MCF 10A (cell line): ENCODE measurements at regions of chr5 and their contacts with region 1.

Region 1: GRCh38 chr5:142713121-142713706 is 27.3 kb upstream of the FGF1 start:
- DNase-seq: peak; percentile 95
- H3K4me3 Mint-ChIP-seq: peak overlapping the region; percentile 77
- H3K27ac Mint-ChIP-seq: peak overlapping the region; percentile 10
- H3K4me1 Mint-ChIP-seq: peaks cover 19% of the 10 kb centered on the region
- H3K27me3 Mint-ChIP-seq: no peaks in the 10 kb centered on the region
- CTCF ChIP-seq: peak; percentile 99

Region 2: DNA sequence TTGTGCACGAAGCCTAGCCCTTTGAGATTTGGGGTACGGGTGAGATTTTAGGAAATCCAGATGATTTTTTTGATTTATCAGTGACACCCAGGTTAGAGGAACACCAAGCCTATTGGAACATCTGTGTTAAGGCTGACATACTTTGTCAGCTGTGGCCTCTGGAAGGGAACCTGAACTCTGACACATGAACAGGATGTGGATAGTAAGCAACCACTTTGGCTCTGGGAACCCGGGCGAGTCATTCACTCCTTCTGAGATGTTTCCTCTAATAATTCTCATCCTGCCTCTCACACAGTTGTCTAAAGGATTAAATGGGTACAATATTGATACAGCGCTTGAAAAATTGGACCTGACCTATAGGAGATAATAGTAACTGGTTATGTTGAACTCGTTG is 95.1 kb before region 1 on chr5:
- CTCF ChIA-PET with region 1: interaction called, 25 read pairs
- POLR2A ChIA-PET with region 1: no interaction called
- intact Hi-C with region 1: no loop called
- DNase-seq: no peak
- H3K4me3 Mint-ChIP-seq: no peak overlapping the region
- H3K27ac Mint-ChIP-seq: no peak overlapping the region
- H3K4me1 Mint-ChIP-seq: peaks cover 12% of the 10 kb centered on the region
- H3K27me3 Mint-ChIP-seq: no peaks in the 10 kb centered on the region
- CTCF ChIP-seq: no peak

Region 3: GRCh38 chr5:142674531-142675469 is 38.4 kb before region 1 on chr5:
- CTCF ChIA-PET with region 1: interaction called, 1,243 read pairs
- POLR2A ChIA-PET with region 1: no interaction called
- intact Hi-C with region 1: no loop called
- DNase-seq: peak; percentile 68
- H3K4me3 Mint-ChIP-seq: no peak overlapping the region
- H3K27ac Mint-ChIP-seq: no peak overlapping the region
- H3K4me1 Mint-ChIP-seq: peaks cover 10% of the 10 kb centered on the region
- H3K27me3 Mint-ChIP-seq: no peaks in the 10 kb centered on the region
- CTCF ChIP-seq: no peak

Region 4: GRCh38 chr5:142740474-142741242 is 27.4 kb after region 1 on chr5:
- CTCF ChIA-PET with region 1: interaction called, 253 read pairs
- POLR2A ChIA-PET with region 1: no interaction called
- intact Hi-C with region 1: no loop called
- DNase-seq: no peak
- H3K4me3 Mint-ChIP-seq: no peak overlapping the region
- H3K27ac Mint-ChIP-seq: no peak overlapping the region
- H3K4me1 Mint-ChIP-seq: peaks cover 13% of the 10 kb centered on the region
- H3K27me3 Mint-ChIP-seq: no peaks in the 10 kb centered on the region
- CTCF ChIP-seq: no peak

Region 5: GRCh38 chr5:142852416-142853198 is 139.4 kb after region 1 on chr5:
- CTCF ChIA-PET with region 1: interaction called, 15 read pairs
- POLR2A ChIA-PET with region 1: no interaction called
- intact Hi-C with region 1: no loop called
- DNase-seq: no peak
- H3K4me3 Mint-ChIP-seq: no peak overlapping the region
- H3K27ac Mint-ChIP-seq: no peak overlapping the region
- H3K4me1 Mint-ChIP-seq: peaks cover 2% of the 10 kb centered on the region
- H3K27me3 Mint-ChIP-seq: no peaks in the 10 kb centered on the region
- CTCF ChIP-seq: no peak

Region 6: GRCh38 chr5:142894749-142895148 is 181.5 kb after region 1 on chr5:
- CTCF ChIA-PET with region 1: interaction called, 1,942 read pairs
- POLR2A ChIA-PET with region 1: interaction called, 4 read pairs
- intact Hi-C with region 1: no loop called
- DNase-seq: peak; percentile 31
- H3K4me3 Mint-ChIP-seq: no peak overlapping the region
- H3K27ac Mint-ChIP-seq: no peak overlapping the region
- H3K4me1 Mint-ChIP-seq: peaks cover 19% of the 10 kb centered on the region
- H3K27me3 Mint-ChIP-seq: no peaks in the 10 kb centered on the region
- CTCF ChIP-seq: no peak

Region 7: DNA sequence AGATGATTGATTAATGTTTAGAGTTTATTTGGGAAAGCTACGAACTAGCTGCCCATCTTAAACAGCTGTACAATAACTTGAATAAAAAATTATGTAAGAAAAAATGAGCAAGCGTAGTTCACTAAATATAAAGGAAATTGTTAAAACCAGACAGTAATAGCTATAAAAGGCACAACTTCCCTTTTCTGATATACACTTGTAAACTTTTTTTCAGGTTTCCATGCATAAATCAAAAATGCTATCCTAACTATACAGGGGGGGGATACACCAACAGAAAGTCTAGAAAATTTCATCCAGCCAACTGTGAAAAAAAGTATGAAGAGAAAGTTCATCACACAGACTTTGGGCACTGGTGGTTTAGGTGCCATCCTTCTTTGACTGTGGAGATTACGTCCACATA is 568.0 kb after region 1 on chr5:
- CTCF ChIA-PET with region 1: no interaction called
- POLR2A ChIA-PET with region 1: no interaction called
- intact Hi-C with region 1: no loop called
- DNase-seq: no peak
- H3K4me3 Mint-ChIP-seq: no peak overlapping the region
- H3K27ac Mint-ChIP-seq: no peak overlapping the region
- H3K4me1 Mint-ChIP-seq: no peaks in the 10 kb centered on the region
- H3K27me3 Mint-ChIP-seq: no peaks in the 10 kb centered on the region
- CTCF ChIP-seq: no peak

Region 8: GRCh38 chr5:144183254-144183889 is 1470.2 kb after region 1 on chr5:
- CTCF ChIA-PET with region 1: no interaction called
- POLR2A ChIA-PET with region 1: no interaction called
- intact Hi-C with region 1: loop called (anchors 1 kb)
- DNase-seq: peak; percentile 64
- H3K4me3 Mint-ChIP-seq: no peak overlapping the region
- H3K27ac Mint-ChIP-seq: no peak overlapping the region
- H3K4me1 Mint-ChIP-seq: peaks cover 14% of the 10 kb centered on the region
- H3K27me3 Mint-ChIP-seq: no peaks in the 10 kb centered on the region
- CTCF ChIP-seq: peak; percentile 74